ENCODE measurements at regions of chr12 and their contacts with region 1.

Region 1: DNA sequence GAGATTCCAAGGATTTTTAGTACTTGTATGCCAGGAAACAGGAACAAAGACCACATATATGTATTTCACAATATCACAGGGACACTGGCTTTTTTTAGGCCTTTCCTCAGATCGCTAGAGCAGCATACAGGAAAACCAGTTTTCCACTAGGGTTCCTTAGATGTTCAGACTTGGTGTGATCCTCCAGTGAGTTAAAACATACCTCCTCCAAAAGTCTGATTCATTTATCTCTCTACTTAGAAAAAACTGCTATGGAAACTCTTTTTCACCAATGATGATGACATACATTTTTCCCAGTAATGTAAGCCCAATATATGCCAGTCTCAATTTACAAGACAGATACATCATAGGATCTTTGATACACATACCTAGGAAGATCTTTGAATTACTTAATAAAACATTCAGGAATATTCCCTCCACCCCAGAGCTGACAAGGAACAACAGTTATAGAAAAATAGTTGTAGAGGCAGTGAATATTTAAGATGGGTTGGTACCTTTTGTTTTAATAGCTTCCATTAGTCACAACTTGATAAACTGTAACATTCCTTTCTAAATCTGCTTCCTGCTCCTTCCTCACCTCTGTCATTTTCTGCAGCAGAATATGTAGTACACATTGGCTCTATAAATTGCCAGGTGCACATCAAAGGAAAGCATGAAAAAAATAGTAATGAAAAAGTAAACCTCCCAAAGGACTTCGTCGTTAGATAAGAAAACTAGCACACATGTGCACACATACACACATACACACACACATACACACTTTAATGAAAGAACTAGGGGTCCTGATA is 27.5 kb downstream of the BCAT1 start:
- DNase-seq: no peak
- H3K4me3 Mint-ChIP-seq: no peak overlapping the region
- H3K27ac Mint-ChIP-seq: no peak overlapping the region
- H3K4me1 Mint-ChIP-seq: peaks cover 33% of the 10 kb centered on the region
- H3K27me3 Mint-ChIP-seq: peaks cover 7% of the 10 kb centered on the region

Region 2: GRCh38 chr12:24947541-24948419 is 26.3 kb after region 1 on chr12:
- CTCF ChIA-PET with region 1: no interaction called
- POLR2A ChIA-PET with region 1: interaction called, 3 read pairs
- intact Hi-C with region 1: loop called (anchors 1 kb)
- DNase-seq: no peak
- H3K4me3 Mint-ChIP-seq: peak overlapping the region; percentile 78
- H3K27ac Mint-ChIP-seq: peak overlapping the region; percentile 53
- H3K4me1 Mint-ChIP-seq: peaks cover 34% of the 10 kb centered on the region
- H3K27me3 Mint-ChIP-seq: peaks cover 55% of the 10 kb centered on the region

Region 3: DNA sequence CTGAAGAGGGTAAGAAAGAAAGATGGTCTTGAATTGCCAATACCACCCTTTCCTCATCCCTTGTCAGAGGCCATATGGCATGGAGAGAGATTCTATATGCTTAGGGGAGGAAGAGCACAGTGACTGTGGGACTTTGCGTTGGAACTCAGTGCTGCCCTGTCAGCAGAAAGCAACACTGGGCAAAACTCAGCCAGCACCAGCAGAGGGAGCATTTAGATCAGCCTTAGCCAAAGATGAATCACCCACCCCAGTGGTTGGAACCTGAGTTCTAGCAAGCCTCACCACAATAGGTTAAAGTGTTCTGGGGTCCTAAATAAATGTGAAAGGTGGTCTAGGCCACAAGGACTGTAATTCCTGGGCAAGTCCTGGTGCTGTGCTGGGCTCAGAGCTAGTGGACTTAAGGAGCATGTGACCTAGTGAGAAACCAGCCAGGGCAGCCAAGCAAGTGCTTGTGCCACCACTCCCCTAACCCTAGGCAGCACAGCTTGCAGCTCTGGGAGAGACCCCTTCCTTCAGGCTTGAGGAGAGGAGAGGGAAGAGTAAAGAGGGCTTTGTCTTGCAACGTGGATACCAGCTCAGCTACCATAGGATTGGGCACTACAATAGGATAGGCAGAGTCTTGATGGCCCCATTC is 38.9 kb after region 1 on chr12:
- CTCF ChIA-PET with region 1: no interaction called
- POLR2A ChIA-PET with region 1: no interaction called
- intact Hi-C with region 1: loop called (anchors 1 kb)
- DNase-seq: peak; percentile 71
- H3K4me3 Mint-ChIP-seq: no peak overlapping the region
- H3K27ac Mint-ChIP-seq: no peak overlapping the region
- H3K4me1 Mint-ChIP-seq: peaks cover 14% of the 10 kb centered on the region
- H3K27me3 Mint-ChIP-seq: peaks cover 10% of the 10 kb centered on the region

Measured in activated CD4-positive, alpha-beta memory T cell treated with anti-CD3 and anti-CD28 coated beads for 36 hours (primary cell).